KBM-7 (cell line): ENCODE measurements at regions of chr15 and their contacts with region 1.

Region 1: GRCh38 chr15:64740311-64741170 is 34.8 kb downstream of the RBPMS2 start:
- DNase-seq: peak; percentile 57

Region 2: DNA sequence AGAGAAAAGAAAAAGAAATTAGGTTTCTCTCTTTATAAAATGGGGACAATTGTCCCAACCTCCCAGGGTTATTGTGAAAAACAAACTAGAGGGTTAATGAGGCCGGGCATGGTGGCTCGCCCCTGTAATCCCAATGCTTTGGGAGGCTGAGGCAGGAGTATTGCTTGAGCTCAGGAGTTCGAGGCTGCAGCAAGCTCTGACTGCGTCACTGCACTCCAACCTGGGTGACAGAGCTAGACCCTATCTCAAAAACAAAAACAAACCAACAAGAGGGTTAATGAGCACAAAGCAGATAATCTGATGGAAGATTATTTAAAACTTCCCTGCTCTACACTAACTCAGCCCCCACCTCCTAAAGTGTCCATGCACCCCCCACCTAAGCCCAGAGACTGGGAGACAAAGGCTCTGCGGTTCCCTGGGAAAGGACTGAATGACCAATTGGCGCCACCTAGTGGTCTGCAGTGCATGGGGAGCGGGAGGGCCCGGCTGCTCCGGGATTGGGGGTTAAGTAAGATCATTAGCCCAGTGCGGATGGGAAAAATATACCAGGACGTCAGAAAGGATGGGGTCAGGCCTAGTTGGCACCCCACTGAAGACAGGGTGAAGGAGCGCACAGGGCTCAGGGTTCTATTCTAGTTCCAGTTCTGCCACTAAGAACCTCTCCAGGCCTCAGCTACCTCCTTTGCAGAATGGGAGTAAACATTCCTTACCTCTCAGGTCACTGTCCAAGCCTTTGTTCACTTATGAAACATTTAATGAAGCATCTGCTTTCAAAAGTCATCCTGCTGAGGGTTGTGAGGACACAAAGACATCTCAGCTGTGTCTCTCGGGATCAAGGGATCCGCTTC is 69.3 kb after region 1 on chr15:
- in situ Hi-C with region 1: loop called (anchors 10 kb)
- DNase-seq: peak; percentile 90

Region 3: DNA sequence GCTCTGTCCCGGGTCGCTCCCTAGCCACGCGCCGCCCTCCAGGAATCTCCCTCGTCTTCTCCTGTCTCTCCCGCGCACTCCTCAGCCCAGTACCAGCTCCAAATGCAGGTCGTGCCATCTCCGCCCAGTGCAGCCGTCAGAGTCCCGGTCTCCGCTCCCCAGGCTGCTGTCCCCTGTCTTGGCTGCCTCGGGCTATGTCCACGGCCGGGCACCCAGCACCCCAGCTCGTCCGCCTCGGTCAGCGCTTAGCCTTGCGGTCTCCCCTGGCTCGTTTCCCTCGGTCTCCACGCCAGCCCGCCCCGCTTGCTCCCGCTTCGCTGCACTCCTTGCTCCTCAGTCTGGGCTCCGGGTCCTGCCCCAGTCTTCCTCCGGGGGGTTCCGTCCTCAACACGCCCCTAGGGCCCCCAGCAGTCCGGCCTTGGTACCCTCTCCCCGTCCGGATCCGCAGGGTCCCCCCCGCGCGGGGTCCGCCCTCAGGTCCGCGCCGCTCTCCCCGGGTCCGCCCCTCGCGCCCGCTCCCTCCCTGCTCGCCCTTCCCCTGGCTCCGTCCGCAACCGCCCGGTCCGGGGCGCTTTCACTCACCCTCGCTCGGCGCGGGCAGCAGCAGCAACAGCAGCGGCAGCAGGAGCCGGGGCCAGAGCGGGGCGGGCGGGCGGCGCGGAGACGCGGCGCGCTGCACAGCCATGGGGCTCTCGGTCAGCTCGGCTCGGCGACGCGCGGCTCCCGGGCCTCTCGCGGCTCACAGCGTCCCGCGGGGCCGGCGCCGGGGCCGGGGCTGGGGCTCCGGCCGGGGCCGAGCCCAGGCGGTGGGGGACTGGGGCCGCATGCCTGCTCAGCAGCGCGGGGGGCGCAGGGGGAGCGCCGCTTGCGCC is 636.8 kb after region 1 on chr15:
- in situ Hi-C with region 1: no loop called
- DNase-seq: no peak